H1 (cell line): ENCODE measurements at regions of chr11 and their contacts with region 1.

Region 1: DNA sequence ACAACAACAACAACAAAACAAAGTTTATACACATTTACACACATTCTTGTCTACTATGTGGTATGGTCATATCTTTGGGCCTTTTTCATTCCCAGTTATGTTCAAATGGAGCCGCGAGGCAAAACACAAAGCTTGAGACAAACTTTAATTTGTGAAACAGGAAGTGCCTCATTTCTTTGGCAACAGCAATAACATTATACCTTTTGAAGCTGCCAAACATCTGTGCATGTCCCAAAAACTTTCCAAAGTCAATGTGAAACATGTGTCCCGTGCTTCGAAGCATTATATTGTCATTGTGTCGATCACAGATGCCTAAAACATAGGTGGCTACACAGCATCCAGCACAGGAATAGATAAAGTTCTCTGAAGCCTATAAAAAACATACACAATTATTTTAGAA is 25.0 kb upstream of the RPS13 start:
- DNase-seq: no peak
- H3K4me3 ChIP-seq: no peak overlapping the region
- H3K27ac ChIP-seq: no peak overlapping the region
- H3K4me1 ChIP-seq: no peaks in the 10 kb centered on the region
- H3K27me3 ChIP-seq: no peaks in the 10 kb centered on the region
- CTCF ChIP-seq: no peak
- EP300 ChIP-seq: no peak
- POLR2A ChIP-seq: no peak
- RAD21 ChIP-seq: no peak

Region 2: GRCh38 chr11:17026487-17027082 is 75.9 kb before region 1 on chr11:
- CTCF ChIA-PET with region 1: no interaction called
- POLR2A ChIA-PET with region 1: no interaction called
- DNase-seq: no peak
- H3K4me3 ChIP-seq: no peak overlapping the region
- H3K27ac ChIP-seq: no peak overlapping the region
- H3K4me1 ChIP-seq: no peaks in the 10 kb centered on the region; a peak in 1 of 7 replicates
- H3K27me3 ChIP-seq: no peaks in the 10 kb centered on the region
- CTCF ChIP-seq: no peak
- EP300 ChIP-seq: no peak
- POLR2A ChIP-seq: no peak
- RAD21 ChIP-seq: no peak

Region 3: DNA sequence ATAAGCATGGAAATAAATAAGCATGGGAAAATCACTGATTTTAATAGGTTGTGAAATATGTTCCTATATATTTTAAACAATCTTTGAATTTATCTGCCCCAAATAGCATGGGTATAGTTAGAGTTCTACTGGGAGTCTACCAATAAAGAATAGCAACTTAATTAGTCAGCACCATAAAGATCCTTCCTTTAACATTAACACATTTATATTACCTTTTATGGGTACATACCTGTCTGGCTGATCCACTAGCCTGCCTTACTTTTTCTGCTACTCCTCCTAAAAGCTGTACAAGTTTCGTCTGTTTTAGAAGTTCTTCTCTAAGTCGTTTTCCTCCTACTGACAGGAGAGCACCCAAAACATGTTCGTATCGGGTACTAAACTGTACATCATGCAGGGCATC is 14.8 kb after region 1 on chr11:
- CTCF ChIA-PET with region 1: interaction called, 23 read pairs
- POLR2A ChIA-PET with region 1: no interaction called
- DNase-seq: no peak
- H3K4me3 ChIP-seq: no peak overlapping the region
- H3K27ac ChIP-seq: no peak overlapping the region
- H3K4me1 ChIP-seq: no peaks in the 10 kb centered on the region
- H3K27me3 ChIP-seq: no peaks in the 10 kb centered on the region
- CTCF ChIP-seq: no peak
- EP300 ChIP-seq: no peak
- POLR2A ChIP-seq: no peak
- RAD21 ChIP-seq: no peak

Region 4: DNA sequence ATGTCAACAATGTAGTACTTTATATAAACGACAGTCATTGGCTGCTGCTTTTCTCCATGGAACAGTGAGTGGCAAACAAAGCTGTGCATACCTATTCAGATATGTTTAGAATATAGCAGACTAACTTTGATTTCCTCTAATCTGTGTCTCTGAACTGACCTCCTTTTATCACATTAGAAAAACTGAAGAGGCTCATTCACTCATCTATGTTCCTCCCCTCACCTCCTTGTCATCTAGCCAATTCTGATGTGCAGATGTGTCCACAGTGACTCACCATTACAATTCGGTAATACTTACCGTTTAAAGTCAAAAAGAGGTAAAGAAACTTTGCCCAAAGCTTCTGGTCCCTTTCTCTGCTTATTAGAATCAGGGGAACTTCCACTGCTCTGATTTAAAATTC is 26.5 kb after region 1 on chr11:
- CTCF ChIA-PET with region 1: interaction called, 13 read pairs
- POLR2A ChIA-PET with region 1: no interaction called
- DNase-seq: no peak
- H3K4me3 ChIP-seq: no peak overlapping the region
- H3K27ac ChIP-seq: no peak overlapping the region
- H3K4me1 ChIP-seq: no peaks in the 10 kb centered on the region
- H3K27me3 ChIP-seq: no peaks in the 10 kb centered on the region
- CTCF ChIP-seq: no peak
- EP300 ChIP-seq: no peak
- POLR2A ChIP-seq: no peak
- RAD21 ChIP-seq: no peak

Region 5: GRCh38 chr11:17161515-17161914 is 59.1 kb after region 1 on chr11:
- CTCF ChIA-PET with region 1: no interaction called
- POLR2A ChIA-PET with region 1: no interaction called
- DNase-seq: no peak
- H3K4me3 ChIP-seq: no peak overlapping the region
- H3K27ac ChIP-seq: no peak overlapping the region
- H3K4me1 ChIP-seq: peaks cover 0 to 3% (median 0%) of the 10 kb centered on the region in 4 experiments; a peak in 1 of 7 replicates
- H3K27me3 ChIP-seq: no peaks in the 10 kb centered on the region
- CTCF ChIP-seq: no peak
- EP300 ChIP-seq: no peak
- POLR2A ChIP-seq: no peak
- RAD21 ChIP-seq: no peak

Region 6: GRCh38 chr11:17173332-17173731 is 70.9 kb after region 1 on chr11:
- CTCF ChIA-PET with region 1: no interaction called
- POLR2A ChIA-PET with region 1: no interaction called
- DNase-seq: no peak
- H3K4me3 ChIP-seq: no peak overlapping the region
- H3K27ac ChIP-seq: no peak overlapping the region
- H3K4me1 ChIP-seq: peaks cover 0 to 3% (median 0%) of the 10 kb centered on the region in 4 experiments; a peak in 1 of 7 replicates
- H3K27me3 ChIP-seq: no peaks in the 10 kb centered on the region
- CTCF ChIP-seq: no peak
- EP300 ChIP-seq: no peak
- POLR2A ChIP-seq: no peak
- RAD21 ChIP-seq: no peak